MCF 10A (cell line): ENCODE measurements at regions of chr6 and their contacts with region 1.

Region 1: GRCh38 chr6:20291764-20292580 is 79.7 kb upstream of the MBOAT1 start:
- DNase-seq: peak; percentile 90
- H3K4me3 Mint-ChIP-seq: no peak overlapping the region
- H3K27ac Mint-ChIP-seq: no peak overlapping the region
- H3K4me1 Mint-ChIP-seq: no peaks in the 10 kb centered on the region
- H3K27me3 Mint-ChIP-seq: peaks cover 17% of the 10 kb centered on the region
- CTCF ChIP-seq: peak; percentile 81

Region 2: GRCh38 chr6:20467437-20467836 is 175.5 kb after region 1 on chr6:
- CTCF ChIA-PET with region 1: no interaction called
- POLR2A ChIA-PET with region 1: no interaction called
- intact Hi-C with region 1: no loop called
- DNase-seq: no peak
- H3K4me3 Mint-ChIP-seq: no peak overlapping the region
- H3K27ac Mint-ChIP-seq: no peak overlapping the region
- H3K4me1 Mint-ChIP-seq: peaks cover 7% of the 10 kb centered on the region
- H3K27me3 Mint-ChIP-seq: no peaks in the 10 kb centered on the region
- CTCF ChIP-seq: no peak

Region 3: GRCh38 chr6:20534295-20535262 is 242.6 kb after region 1 on chr6 and contains the start of gene CDKAL1:
- CTCF ChIA-PET with region 1: interaction called, 27 read pairs
- POLR2A ChIA-PET with region 1: interaction called, 4 read pairs
- intact Hi-C with region 1: no loop called
- DNase-seq: peak; percentile 89
- H3K4me3 Mint-ChIP-seq: peak within 1 kb of the TSS; percentile 86
- H3K27ac Mint-ChIP-seq: peak within 1 kb of the TSS; percentile 92
- H3K4me1 Mint-ChIP-seq: peaks cover 19% of the 10 kb centered on the region
- H3K27me3 Mint-ChIP-seq: no peaks in the 10 kb centered on the region
- CTCF ChIP-seq: no peak
- total RNA-seq, gene CDKAL1: 11.8 and 13.2 TPM in 2 replicates